ENCODE measurements at regions of chr20 and their contacts with region 1.

Region 1: DNA sequence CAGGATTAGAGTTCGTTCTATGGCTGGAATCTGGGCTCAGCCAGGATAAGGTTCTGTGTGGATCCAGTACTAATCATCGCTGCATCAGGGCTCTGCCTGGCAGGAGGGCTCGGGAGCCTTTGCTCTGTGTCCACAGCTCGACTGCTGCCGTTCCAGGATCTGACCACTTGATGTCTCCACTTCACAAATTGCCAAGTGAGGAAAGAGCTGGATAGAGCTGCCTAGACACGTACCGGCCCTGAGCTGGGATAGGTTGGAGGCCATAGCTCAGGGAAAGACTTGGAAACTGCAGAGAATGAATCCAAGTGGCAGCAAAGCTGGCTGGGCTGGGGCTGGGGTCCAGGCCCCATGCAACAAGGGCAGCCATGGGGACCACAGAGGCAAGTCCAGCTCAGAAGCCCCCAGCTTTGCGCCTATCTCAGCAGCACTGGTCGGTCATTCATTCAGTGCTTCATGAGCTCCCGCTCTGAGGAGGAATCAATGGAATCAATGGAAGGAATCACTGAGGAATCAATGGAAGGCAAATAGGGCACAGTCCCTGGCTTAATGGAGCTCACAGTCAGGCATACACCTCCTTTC is 38.0 kb upstream of the TOP1 start:
- DNase-seq: peak; percentile 92
- H3K4me3 ChIP-seq: peak overlapping the region; percentile 51
- H3K27ac ChIP-seq: peak overlapping the region; percentile 98
- H3K4me1 ChIP-seq: peaks cover 98% of the 10 kb centered on the region
- CTCF ChIP-seq: peak; percentile 90

Region 2: DNA sequence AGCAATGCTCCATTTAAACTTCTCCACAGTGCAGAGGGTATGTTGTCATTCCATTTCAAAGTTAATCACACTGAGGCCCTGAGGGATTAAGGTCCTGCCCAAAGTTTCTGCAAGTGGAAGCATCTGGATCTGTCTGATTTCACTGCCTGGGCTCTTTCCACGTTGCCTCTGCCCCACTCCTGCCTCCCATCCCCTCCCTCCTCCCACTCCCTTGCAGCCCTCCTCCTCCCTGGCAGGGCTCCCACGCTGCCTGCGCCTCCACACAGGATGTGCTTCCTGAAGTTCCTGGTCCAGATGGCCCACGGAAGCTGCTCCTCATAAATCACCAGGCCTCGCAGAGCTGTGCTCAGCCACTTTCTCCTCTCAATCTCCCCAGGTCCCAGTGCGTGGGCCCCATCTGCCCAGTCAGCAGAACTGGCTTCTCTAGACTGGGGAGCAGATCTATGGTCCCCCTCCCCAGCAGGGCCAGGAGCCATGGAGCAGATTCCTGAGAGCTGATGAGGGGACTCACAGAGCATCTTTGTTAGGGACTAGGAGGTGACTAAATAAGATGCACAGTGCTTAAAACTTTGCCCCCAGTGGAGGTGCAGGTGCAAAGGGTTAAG is 236.2 kb before region 1 on chr20:
- CTCF ChIA-PET with region 1: no interaction called
- POLR2A ChIA-PET with region 1: no interaction called
- intact Hi-C with region 1: no loop called
- DNase-seq: no peak
- H3K4me3 ChIP-seq: no peak overlapping the region
- H3K27ac ChIP-seq: no peak overlapping the region
- H3K4me1 ChIP-seq: peaks cover 19% of the 10 kb centered on the region
- CTCF ChIP-seq: no peak

Region 3: DNA sequence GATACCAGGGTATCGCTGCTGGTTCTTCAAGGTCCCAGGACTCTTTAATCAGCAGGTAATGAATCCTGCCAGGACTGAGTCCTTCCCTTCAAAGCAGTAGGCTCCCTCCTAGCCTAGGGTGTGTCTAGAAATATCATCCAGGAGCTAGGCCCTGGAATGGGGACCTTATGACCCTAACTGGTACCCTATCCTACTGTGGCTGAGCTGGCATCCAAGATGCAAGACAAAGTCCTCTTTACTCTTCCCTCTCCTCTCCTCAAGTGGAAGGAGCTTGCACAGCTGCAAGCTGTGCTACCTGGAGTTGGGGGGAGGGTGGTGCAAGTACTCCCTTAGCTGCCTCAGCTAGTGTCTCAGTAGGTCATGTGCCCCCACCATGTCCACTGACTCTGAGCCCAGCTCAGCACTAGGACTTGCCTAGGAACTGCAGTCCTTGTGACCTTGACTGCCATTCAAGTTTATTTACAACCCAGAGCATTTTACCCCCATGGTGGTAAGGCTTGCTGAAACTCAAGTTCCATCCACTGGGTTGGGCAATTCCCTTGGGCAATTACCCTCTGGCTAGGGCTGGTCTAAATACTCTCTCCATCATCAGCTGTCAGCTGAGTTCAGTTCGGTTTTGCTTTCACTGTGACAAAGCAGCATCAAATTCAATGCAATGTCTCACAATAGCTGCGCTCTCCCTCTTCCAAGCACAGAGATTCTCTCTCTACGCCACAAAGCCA is 10.4 kb before region 1 on chr20:
- CTCF ChIA-PET with region 1: interaction called, 6 read pairs
- POLR2A ChIA-PET with region 1: interaction called, 68 read pairs
- intact Hi-C with region 1: no loop called
- DNase-seq: no peak
- H3K4me3 ChIP-seq: no peak overlapping the region
- H3K27ac ChIP-seq: no peak overlapping the region
- H3K4me1 ChIP-seq: peaks cover 45% of the 10 kb centered on the region
- CTCF ChIP-seq: no peak

Region 4: DNA sequence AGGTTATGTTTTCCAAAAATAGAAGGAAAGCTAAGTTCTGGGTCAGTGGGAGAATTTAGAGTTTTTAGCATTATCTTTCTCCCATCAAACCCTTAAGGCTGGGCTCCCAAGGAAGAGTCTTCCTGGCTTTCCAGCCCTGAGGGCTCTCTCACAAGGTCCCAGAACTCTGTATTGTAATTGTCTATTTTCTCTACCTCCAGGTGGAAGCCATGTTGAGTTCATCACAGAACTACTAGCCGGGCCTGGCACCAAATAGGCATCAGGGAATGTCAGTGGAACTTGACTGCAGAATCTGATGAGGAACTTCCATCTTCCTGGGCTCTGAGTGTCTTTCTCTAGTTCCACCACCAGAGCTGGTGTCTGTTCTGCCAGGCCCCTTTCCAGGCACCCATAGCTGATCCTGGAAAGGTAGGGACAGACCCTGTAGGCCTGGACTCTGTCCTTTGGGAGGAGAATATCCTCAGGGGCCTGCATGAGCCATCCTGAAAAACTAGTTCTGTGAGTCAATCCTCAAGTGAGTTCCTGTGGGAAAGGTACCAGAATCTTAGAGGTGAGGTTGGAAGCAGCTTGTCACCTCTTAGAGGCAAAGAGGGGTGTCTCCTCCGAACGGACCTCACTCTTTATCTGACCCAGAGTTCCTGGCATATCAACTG is 26.9 kb after region 1 on chr20:
- CTCF ChIA-PET with region 1: interaction called, 56 read pairs
- POLR2A ChIA-PET with region 1: interaction called, 302 read pairs
- intact Hi-C with region 1: no loop called
- DNase-seq: no peak
- H3K4me3 ChIP-seq: no peak overlapping the region
- H3K27ac ChIP-seq: no peak overlapping the region
- H3K4me1 ChIP-seq: peaks cover 59% of the 10 kb centered on the region
- CTCF ChIP-seq: no peak

Region 5: GRCh38 chr20:41047975-41048305 is 57.3 kb after region 1 on chr20:
- CTCF ChIA-PET with region 1: interaction called, 13 read pairs
- POLR2A ChIA-PET with region 1: interaction called, 23 read pairs
- intact Hi-C with region 1: loop called (anchors 5 kb)
- DNase-seq: peak; percentile 51
- H3K4me3 ChIP-seq: peak overlapping the region; percentile 44
- H3K27ac ChIP-seq: peak overlapping the region; percentile 71
- H3K4me1 ChIP-seq: peaks cover 89% of the 10 kb centered on the region
- CTCF ChIP-seq: no peak

Region 6: GRCh38 chr20:41078329-41078728 is 87.7 kb after region 1 on chr20:
- CTCF ChIA-PET with region 1: interaction called, 10 read pairs
- POLR2A ChIA-PET with region 1: interaction called, 23 read pairs
- intact Hi-C with region 1: loop called (anchors 1 kb)
- DNase-seq: peak; percentile 70
- H3K4me3 ChIP-seq: no peak overlapping the region
- H3K27ac ChIP-seq: peak overlapping the region; percentile 27
- H3K4me1 ChIP-seq: peaks cover 40% of the 10 kb centered on the region
- CTCF ChIP-seq: peak; percentile 81

Region 7: GRCh38 chr20:41499961-41500725 is 509.5 kb after region 1 on chr20:
- CTCF ChIA-PET with region 1: no interaction called
- POLR2A ChIA-PET with region 1: no interaction called
- intact Hi-C with region 1: no loop called
- DNase-seq: no peak
- H3K4me3 ChIP-seq: no peak overlapping the region
- H3K27ac ChIP-seq: no peak overlapping the region
- H3K4me1 ChIP-seq: no peaks in the 10 kb centered on the region
- CTCF ChIP-seq: no peak